ENCODE measurements at regions of chr2 and their contacts with region 1.

Region 1: DNA sequence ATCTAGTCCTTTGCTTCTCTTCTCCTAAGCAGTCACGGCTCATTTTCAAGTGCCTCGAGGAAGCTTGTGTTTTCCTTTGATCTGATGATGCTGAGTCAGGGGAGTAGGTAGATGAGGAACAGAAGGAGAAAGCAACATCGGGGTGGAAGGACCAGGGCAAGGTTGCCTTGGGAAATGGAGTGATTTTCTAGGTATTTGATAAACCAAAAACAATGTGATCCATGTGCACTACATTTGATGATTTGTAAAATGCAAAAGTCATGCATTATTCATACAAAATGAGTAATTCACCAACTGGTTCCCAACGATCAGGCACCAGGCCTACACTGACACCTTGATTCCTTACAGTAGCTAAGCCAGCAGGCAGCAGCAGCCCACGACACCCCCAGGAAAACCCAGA is 205.3 kb downstream of the ANAPC1 start:
- DNase-seq: no peak
- H3K4me3 ChIP-seq: no peak overlapping the region
- H3K27me3 ChIP-seq: no peaks in the 10 kb centered on the region
- CTCF ChIP-seq: no peak

Region 2: GRCh38 chr2:111652038-111652437 is 26.6 kb before region 1 on chr2:
- CTCF ChIA-PET with region 1: no interaction called
- POLR2A ChIA-PET with region 1: no interaction called
- DNase-seq: no peak
- H3K4me3 ChIP-seq: no peak overlapping the region
- H3K27me3 ChIP-seq: peaks cover 3% of the 10 kb centered on the region; the same call in 1 of the 2 replicates
- CTCF ChIP-seq: no peak

Region 3: GRCh38 chr2:111692341-111692740 is 13.7 kb after region 1 on chr2:
- CTCF ChIA-PET with region 1: interaction called, 21 read pairs
- POLR2A ChIA-PET with region 1: interaction called, 4 read pairs
- DNase-seq: no peak
- H3K4me3 ChIP-seq: no peak overlapping the region
- H3K27me3 ChIP-seq: peaks cover 1% of the 10 kb centered on the region; the same call in 1 of the 2 replicates
- CTCF ChIP-seq: no peak